ENCODE measurements at regions of chr2 and their contacts with region 1.

Region 1: DNA sequence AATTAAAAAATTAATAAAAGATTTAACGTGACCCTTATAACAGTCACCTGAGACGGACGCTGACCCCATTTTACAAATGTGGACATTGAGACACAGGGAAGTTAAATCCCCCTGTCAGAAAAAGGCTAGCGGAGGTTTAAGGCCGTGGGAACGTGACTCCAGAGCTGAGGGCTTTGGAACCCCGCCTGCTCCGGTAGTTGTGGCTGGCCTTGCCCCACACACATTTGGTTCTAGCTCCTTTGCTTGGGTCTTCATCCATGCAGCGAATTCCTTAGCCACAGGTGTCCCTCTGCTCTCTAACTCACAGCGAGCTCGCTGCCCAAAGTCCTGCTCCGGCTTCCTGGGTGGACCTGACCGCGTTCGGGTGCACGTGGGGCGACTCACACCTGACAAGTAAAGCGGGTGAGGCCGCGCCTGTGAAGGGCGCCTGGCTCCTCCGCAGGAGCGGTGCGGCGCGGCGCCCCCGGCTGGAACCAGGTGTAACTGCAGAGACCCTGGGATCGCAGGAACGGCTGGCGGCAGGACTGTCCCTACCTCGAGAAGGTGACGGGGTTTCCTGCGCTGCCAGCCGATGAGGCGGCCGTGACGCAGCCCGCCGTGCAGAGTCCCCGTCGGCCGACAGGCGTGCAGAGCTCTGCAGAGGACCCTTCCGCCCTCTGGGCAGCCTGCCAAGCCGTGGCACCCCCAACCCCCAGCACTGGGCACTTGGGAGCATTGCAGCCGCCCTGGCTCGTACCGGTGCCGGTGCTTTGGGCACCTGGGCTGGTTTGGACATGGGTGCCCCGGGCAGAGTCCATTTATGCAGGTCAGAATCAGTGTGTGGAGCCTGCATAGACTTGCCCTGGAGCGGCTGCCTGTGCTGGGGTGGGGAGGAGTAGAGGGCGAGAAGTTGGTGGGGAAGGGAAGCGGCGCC is 2.4 kb upstream of the PROC start:
- DNase-seq: no peak
- ATAC-seq: peak; percentile 83
- H3K4me3 ChIP-seq: peak overlapping the region; percentile 35 to 51
- H3K27ac ChIP-seq: peak overlapping the region; percentile 74
- H3K4me1 ChIP-seq: peaks cover 61% of the 10 kb centered on the region
- H3K27me3 ChIP-seq: no peaks in the 10 kb centered on the region
- CTCF ChIP-seq: peak; percentile 94

Region 2: GRCh38 chr2:127330753-127331152 is 85.1 kb before region 1 on chr2:
- CTCF ChIA-PET with region 1: no interaction called
- POLR2A ChIA-PET with region 1: no interaction called
- in situ Hi-C with region 1: no loop called
- intact Hi-C with region 1: loop called (anchors 5 kb)
- DNase-seq: no peak
- ATAC-seq: no peak
- H3K4me3 ChIP-seq: no peak overlapping the region
- H3K27ac ChIP-seq: no peak overlapping the region
- H3K4me1 ChIP-seq: no peaks in the 10 kb centered on the region
- H3K27me3 ChIP-seq: no peaks in the 10 kb centered on the region
- CTCF ChIP-seq: no peak

Region 3: GRCh38 chr2:127365211-127365643 is 50.6 kb before region 1 on chr2:
- CTCF ChIA-PET with region 1: no interaction called
- POLR2A ChIA-PET with region 1: no interaction called
- in situ Hi-C with region 1: no loop called
- intact Hi-C with region 1: no loop called
- DNase-seq: no peak
- ATAC-seq: peak; percentile 81
- H3K4me3 ChIP-seq: no peak overlapping the region
- H3K27ac ChIP-seq: no peak overlapping the region
- H3K4me1 ChIP-seq: peaks cover 33% of the 10 kb centered on the region
- H3K27me3 ChIP-seq: no peaks in the 10 kb centered on the region
- CTCF ChIP-seq: no peak